Dorsolateral prefrontal cortex (tissue), 120 donors: ENCODE measurements at regions of chr9 and their contacts with region 1.

Region 1: GRCh38 chr9:84668196-84669012 is 1.1 kb upstream of the NTRK2 start:
- DNase-seq: peak; percentile 74 to 90 (median 86)
- H3K4me3 ChIP-seq: peak overlapping the region; percentile 65 to 90 (median 81)
- H3K27ac ChIP-seq: peak overlapping the region; percentile 82 to 99 (median 97)
- H3K27me3 ChIP-seq: no peaks in the 10 kb centered on the region
- CTCF ChIP-seq: peak; percentile 55 to 91 (median 75)

Region 2: DNA sequence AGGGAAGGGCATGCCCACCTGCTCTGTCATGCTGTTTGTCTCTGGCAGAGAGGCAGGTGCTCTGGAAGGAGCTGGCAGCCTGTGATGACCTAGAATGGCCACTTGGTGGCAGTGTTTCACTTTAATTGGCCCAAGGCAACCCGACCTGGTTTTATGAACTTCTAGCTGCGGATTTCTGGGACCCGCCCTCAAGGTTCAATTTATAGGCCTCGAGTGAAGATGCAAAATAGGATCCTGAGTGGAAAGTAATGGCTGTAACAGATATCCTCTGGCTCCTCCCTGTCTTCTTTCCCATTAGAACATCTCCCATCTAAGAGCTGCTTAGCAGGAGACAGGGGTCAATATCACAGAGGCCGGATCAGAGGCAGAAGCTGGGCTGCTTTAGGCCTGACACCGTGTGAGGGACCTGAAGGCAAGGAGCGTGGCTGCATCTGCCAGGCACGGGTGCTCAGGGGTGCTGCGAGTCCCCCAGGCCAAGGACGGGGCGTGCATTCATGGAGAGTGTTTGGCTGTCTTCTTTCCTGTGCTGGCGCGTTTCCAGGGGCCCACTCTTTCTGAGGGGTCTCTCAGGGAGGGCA is 271.2 kb before region 1 on chr9:
- intact Hi-C with region 1: loop called in 1 of 2 experiments (anchors 10 kb)
- DNase-seq: peak; percentile 47 to 82 (median 70)
- H3K4me3 ChIP-seq: peak overlapping the region in 3 of 59 donors; percentile 7 to 18 (median 11)
- H3K27ac ChIP-seq: peak overlapping the region in 2 of 59 donors; percentile 16 to 21
- H3K27me3 ChIP-seq: peaks cover 0 to 3% (median 0%) of the 10 kb centered on the region in 45 donors
- CTCF ChIP-seq: peak; percentile 78 to 99 (median 96)

Region 3: GRCh38 chr9:84966876-84967833 is 298.8 kb after region 1 on chr9:
- intact Hi-C with region 1: no loop called
- DNase-seq: peak in 7 of 10 donors; percentile 56 to 80 (median 68)
- H3K4me3 ChIP-seq: peak overlapping the region in 13 of 59 donors; percentile 6 to 42 (median 27)
- H3K27ac ChIP-seq: peak overlapping the region in 52 of 59 donors; percentile 0 to 90 (median 56)
- H3K27me3 ChIP-seq: no peaks in the 10 kb centered on the region
- CTCF ChIP-seq: peak in 30 of 56 donors; percentile 11 to 50 (median 30)

Region 4: GRCh38 chr9:85040821-85041465 is 372.5 kb after region 1 on chr9:
- intact Hi-C with region 1: loop called (anchors 1 to 2 kb)
- DNase-seq: peak; percentile 38 to 94 (median 85)
- H3K4me3 ChIP-seq: peak overlapping the region in 58 of 59 donors; percentile 2 to 64 (median 41)
- H3K27ac ChIP-seq: peak overlapping the region; percentile 86 to 100 (median 98)
- H3K27me3 ChIP-seq: no peaks in the 10 kb centered on the region
- CTCF ChIP-seq: peak in 24 of 56 donors; percentile 6 to 36 (median 18)

Region 5: GRCh38 chr9:85522459-85523092 is 854.2 kb after region 1 on chr9:
- intact Hi-C with region 1: loop called in 1 of 2 experiments (anchors 5 kb)
- DNase-seq: peak in 9 of 10 donors; percentile 34 to 80 (median 61)
- H3K4me3 ChIP-seq: peak overlapping the region in 58 of 59 donors; percentile 17 to 68 (median 52)
- H3K27ac ChIP-seq: peak overlapping the region; percentile 59 to 100 (median 98)
- H3K27me3 ChIP-seq: no peaks in the 10 kb centered on the region
- CTCF ChIP-seq: no peak

Region 6: DNA sequence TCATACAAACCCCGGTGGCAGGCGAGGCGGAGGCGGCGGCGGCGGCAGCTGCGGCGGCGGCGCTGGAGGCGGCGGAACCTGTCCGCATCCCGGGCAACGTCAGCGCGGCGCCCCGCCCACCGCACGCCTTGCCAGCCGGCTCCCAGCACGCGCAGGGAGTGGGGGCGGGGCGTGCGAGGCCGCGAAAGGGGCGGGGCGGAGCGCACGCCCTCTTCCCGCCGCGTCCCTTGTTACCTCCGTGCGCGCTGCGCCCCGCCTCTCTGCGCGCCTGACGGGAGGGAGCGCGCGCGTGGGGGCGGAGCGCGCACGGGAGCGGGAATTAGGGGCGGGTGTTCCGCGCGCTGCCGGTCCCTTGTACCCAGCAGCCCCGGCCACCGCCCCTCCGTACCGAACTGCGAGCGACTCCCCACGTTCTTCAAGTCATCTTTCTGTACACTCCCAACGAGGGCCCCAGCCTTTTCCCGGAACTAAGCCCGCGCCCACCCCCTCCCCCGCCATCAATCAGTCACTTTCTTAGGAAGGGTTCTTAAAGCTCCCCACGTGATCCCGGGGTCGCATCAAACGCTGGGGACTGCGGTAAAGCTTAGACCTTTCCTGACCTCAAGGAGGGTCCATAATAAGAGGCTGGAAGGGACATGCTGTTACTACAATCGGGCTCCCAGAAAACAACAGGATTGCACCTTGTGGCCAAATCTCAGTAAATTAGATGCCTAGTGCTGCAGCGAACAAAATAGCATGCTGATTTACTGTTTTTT is 1073.6 kb after region 1 on chr9 and contains the start of gene AGTPBP1:
- intact Hi-C with region 1: loop called in 1 of 2 experiments (anchors 5 kb)
- DNase-seq: peak; percentile 81 to 95 (median 91)
- H3K4me3 ChIP-seq: peak within 1 kb of the TSS; percentile 54 to 99 (median 93)
- H3K27ac ChIP-seq: peak within 1 kb of the TSS; percentile 76 to 97 (median 90)
- H3K27me3 ChIP-seq: no peaks in the 10 kb centered on the region
- CTCF ChIP-seq: peak in 27 of 56 donors; percentile 4 to 49 (median 21)
- total RNA-seq, gene AGTPBP1: 69.0 to 186 (median 111) TPM